Gastrocnemius medialis (tissue), 4 donors: ENCODE measurements at regions of chr10 and their contacts with region 1.

Region 1: GRCh38 chr10:69515699-69516259 is 57.4 kb downstream of the NEUROG3 start:
- DNase-seq: no peak
- ATAC-seq: peak in 1 of 2 donors; percentile 58
- H3K4me3 ChIP-seq: no peak overlapping the region
- H3K27ac ChIP-seq: no peak overlapping the region
- H3K4me1 ChIP-seq: no peaks in the 10 kb centered on the region
- H3K27me3 ChIP-seq: no peaks in the 10 kb centered on the region
- CTCF ChIP-seq: peak; percentile 9 to 63 (median 48)
- POLR2A ChIP-seq: no peak

Region 2: DNA sequence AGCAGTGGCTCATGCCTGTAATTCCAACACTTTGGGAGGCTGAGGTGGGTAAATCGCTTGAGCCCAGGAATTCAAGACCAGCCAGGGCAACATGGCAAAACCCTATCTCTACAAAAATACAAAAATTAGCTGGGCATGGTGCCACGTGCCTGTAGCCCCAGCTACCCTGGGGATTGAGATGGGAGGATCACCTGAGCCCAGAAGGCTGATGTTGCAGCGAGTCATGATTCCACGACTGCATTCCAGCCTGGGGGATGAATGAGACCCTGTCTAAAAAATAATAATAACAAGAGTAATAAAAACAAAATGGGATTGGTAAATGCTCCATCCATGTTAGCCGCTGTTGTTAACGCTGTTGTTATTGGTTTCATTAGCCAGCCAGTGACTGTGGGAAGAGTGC is 296.9 kb before region 1 on chr10:
- in situ Hi-C with region 1: no loop called
- intact Hi-C with region 1: no loop called
- DNase-seq: no peak
- ATAC-seq: no peak
- H3K4me3 ChIP-seq: no peak overlapping the region
- H3K27ac ChIP-seq: no peak overlapping the region
- H3K4me1 ChIP-seq: peaks cover 0 to under 1% of the 10 kb centered on the region in 2 donors
- H3K27me3 ChIP-seq: no peaks in the 10 kb centered on the region
- CTCF ChIP-seq: no peak
- POLR2A ChIP-seq: no peak

Region 3: GRCh38 chr10:69464801-69465401 is 50.9 kb before region 1 on chr10:
- in situ Hi-C with region 1: no loop called
- intact Hi-C with region 1: no loop called
- DNase-seq: peak; percentile 84 to 92
- ATAC-seq: peak; percentile 85 to 88
- H3K4me3 ChIP-seq: no peak overlapping the region
- H3K27ac ChIP-seq: peak overlapping the region; percentile 84 to 95 (median 88)
- H3K4me1 ChIP-seq: peaks cover 85 to 87% of the 10 kb centered on the region in 2 donors
- H3K27me3 ChIP-seq: no peaks in the 10 kb centered on the region
- CTCF ChIP-seq: no peak
- POLR2A ChIP-seq: peak; percentile 23 to 47

Region 4: DNA sequence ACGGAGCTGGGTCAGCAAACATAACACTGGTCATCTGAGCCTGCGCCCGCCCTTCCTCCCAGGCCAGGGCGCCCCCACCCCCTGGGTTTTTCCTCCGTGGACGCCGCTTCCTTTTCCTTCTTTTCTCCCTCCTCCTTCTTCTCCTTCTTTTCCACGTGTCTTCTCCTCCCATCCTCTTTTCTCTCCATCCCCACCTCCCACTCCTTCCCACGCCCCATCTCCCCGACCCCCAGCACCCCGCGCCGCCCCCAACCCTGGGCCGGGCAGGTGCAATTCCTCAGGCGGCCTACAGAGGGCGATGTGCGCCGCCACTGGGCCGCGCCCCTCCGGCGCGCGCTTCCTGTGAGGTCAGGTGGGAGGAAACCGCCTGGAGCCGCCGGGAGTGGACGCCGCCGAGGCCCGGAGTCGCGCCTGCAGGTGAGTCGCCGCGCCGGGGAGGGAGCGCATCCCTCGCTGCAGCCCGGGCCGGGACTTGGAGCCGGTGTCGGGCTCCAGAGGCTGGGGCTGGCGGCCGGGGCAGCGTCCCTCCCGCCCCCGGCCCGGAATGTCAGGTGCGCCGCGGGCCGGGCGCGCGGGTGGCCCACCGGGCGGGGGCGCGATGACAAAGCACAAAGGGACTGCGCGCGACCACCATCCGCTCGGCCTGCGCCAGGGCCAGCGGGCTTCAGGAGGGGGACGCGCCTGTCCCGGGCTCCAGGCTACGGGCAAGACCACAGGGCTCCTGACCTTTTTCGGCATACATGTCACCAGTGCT is 114.3 kb after region 1 on chr10 and contains the start of gene FAM241B:
- in situ Hi-C with region 1: loop called in 3 of 4 experiments (anchors 5 to 10 kb)
- intact Hi-C with region 1: no loop called
- DNase-seq: peak; percentile 18 to 43
- ATAC-seq: peak; percentile 56 to 89
- H3K4me3 ChIP-seq: peak within 1 kb of the TSS; percentile 33 to 63 (median 48)
- H3K27ac ChIP-seq: no peak within 1 kb of the TSS
- H3K4me1 ChIP-seq: peaks cover 0 to 4% of the 10 kb centered on the region in 2 donors
- H3K27me3 ChIP-seq: peaks cover under 1 to 11% (median 3%) of the 10 kb centered on the region in 3 donors
- CTCF ChIP-seq: peak; percentile 66 to 95 (median 88)
- POLR2A ChIP-seq: peak in 1 of 2 donors; percentile 50
- total RNA-seq, gene FAM241B: 1.1 to 2.6 (median 2.5) TPM in 3 of 4 donors, not detected in the other

Region 5: GRCh38 chr10:69839696-69840345 is 324.0 kb after region 1 on chr10:
- in situ Hi-C with region 1: no loop called
- intact Hi-C with region 1: no loop called
- DNase-seq: no peak
- ATAC-seq: no peak
- H3K4me3 ChIP-seq: no peak overlapping the region
- H3K27ac ChIP-seq: no peak overlapping the region
- H3K4me1 ChIP-seq: peaks cover 4 to 11% of the 10 kb centered on the region in 2 donors
- H3K27me3 ChIP-seq: no peaks in the 10 kb centered on the region
- CTCF ChIP-seq: no peak
- POLR2A ChIP-seq: no peak